Right ventricle myocardium inferior (tissue), 1 donor: ENCODE measurements at regions of chr17 and their contacts with region 1.

Region 1: DNA sequence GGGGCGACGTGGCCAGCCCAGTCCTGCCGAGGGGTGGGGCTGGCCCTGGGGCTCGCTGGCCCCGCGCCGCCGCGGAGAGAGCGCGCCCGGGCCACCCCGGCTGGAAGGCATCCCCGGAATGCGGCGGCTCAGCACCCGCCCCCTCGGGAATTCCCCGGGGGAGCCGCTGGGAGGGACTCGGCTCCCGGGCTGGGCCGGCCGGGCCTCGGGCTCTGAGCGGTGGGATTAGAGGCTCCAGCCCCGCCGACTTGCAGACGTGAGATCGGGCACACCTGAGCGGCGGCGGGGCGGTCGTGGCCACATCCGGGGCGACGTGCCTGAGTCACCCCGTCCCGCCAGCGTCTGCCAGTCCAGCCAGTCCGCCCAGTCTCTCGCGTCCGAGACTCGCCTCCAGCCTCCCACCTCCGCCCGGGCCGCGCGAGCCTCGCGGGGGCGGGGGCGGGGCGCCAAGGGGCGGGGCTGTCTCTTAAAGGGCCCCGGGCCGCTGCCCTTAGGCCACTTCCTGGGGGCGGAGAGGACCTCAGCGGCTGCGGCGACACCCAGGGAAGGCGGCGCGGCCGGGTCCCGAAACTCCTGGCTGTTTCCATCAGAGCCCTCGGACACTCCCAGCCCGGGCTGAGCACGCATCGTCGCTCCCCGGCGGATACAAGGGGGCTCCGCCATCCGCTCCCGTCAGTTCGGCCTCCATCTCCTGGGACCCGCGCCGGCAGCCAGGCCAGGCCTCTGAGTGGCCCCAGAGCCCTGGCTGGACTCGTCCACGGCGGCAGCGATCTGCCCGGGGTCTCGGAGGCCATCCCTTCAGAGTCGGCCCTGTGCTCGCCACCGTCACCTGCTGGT is at the start of gene KCTD11:
- DNase-seq: peak; percentile 96
- ATAC-seq: peak; percentile 81
- total RNA-seq, gene KCTD11: 4.7 TPM

Region 2: DNA sequence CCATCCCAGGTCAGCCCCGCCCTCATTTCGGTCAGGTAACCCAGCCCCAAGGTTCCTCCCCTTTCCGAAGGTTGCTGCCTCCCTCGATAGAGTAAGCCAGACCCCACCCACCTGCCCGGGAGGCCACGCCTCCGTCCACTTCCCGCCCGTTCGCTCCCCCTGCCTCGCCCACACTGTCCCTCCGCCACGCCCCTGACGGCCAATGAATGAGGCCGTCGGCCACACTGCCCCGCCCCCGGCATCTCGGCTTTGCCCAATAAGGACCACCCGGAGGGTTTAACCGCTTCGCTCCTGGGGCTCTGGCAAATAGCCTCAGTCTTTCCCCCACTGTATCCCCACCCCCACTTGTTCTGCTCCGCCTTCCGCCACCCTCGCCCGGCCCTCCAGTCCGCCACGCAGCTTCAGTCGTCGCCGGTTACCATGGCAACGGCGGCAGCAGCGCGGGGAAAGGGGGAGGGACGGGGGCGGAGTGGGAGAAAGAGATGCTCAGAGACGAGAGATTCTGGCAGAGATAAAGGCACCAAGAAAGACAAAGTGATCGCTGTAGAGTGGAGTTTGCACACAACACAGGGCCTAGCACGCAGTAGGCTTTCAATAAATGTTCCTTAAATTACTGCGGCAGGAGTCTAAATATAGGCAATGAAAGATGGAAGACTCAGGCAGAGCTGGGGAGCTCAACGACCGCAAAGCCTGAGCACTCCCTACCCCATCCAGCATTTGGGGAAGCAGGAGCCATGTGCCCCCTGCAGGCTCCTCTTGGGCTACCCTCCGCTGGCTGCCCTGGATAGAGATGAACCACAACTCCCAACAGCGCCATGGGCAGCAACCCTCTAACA is 137.4 kb before region 1 on chr17:
- intact Hi-C with region 1: no loop called
- DNase-seq: peak; percentile 99
- ATAC-seq: peak; percentile 91

Region 3: GRCh38 chr17:7280519-7281429 is 71.1 kb before region 1 on chr17:
- intact Hi-C with region 1: loop called (anchors 2 kb)
- DNase-seq: peak; percentile 87
- ATAC-seq: peak; percentile 68

Region 4: DNA sequence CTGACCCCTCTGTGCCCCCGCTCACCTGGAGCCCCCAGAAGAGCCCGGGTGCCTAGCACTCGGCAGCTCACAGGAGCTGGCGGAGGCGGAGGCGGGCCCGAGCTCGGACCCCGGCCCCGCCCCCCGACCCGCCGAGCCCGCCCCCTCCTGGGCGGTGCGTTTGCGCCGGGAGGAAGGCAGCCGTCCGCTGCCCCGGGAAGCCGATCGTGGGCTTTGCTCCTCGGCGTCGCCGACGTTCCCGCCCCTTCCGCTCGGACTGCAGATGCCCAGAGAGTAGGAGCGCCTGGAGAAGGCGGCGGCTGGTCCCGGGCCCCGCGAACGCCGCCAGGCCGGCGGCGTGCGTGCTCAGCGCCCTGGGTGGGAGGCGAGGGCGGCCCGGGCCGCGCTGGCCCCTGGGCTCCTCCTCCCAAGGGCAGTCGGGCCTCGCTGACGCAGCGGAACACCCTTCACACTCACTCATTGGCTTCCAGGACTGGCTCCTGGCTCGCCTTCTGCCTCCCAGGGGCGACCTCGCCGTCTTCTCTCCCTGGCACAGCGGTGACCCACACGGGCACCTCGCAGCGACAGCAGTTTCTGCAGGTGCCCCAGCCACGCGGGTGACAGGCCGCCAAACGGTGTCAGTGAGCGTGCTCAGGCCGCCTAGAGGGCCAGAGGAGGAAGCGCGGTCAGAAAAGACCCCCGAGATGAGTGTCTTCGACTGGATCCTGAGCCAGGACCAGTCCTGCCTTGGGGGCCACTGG is 42.7 kb after region 1 on chr17 and contains the start of gene PLSCR3:
- intact Hi-C with region 1: loop called (anchors 2 kb)
- DNase-seq: peak; percentile 94
- ATAC-seq: peak; percentile 94
- total RNA-seq, gene PLSCR3: 18.4 TPM

Region 5: GRCh38 chr17:7484067-7484918 is 132.4 kb after region 1 on chr17 and contains the start of gene POLR2A:
- intact Hi-C with region 1: loop called (anchors 2 kb)
- DNase-seq: peak; percentile 99
- ATAC-seq: peak; percentile 87
- total RNA-seq, gene POLR2A: 36.4 TPM

Region 6: DNA sequence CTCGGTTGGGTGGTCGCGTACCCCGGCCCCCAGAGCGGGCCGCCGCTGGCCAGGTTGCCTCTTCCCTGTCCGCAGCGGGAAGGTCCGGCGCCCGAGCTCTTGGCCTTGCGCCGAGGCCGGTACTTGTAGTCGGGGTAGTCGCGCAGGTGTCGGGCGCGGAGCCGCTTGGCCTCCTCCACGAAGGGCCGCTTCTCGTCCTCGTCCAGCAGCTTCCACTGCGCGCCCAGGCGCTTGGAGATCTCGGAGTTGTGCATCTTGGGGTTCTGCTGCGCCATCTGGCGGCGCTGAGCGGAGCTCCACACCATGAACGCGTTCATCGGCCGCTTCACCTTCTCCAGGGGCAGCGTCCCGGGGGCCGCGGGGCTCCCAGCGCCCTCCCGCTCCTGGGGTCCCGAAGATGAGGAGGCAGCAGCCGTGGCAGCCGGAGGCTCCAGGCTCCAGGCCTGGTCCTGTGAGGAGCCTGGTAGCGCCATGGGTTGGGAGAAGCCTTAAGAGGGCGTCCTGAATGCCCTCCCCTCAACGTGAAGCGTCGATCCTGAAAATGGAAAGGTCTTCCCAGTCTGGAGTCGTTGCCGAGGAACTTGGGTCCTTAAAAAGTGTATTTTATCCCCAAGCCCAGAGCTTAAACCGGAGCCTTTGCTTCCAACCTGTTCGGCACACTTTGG is 237.5 kb after region 1 on chr17:
- intact Hi-C with region 1: loop called (anchors 5 kb)
- DNase-seq: peak; percentile 94
- ATAC-seq: peak; percentile 84